ENCODE measurements at regions of chr4 and their contacts with region 1.

Region 1: DNA sequence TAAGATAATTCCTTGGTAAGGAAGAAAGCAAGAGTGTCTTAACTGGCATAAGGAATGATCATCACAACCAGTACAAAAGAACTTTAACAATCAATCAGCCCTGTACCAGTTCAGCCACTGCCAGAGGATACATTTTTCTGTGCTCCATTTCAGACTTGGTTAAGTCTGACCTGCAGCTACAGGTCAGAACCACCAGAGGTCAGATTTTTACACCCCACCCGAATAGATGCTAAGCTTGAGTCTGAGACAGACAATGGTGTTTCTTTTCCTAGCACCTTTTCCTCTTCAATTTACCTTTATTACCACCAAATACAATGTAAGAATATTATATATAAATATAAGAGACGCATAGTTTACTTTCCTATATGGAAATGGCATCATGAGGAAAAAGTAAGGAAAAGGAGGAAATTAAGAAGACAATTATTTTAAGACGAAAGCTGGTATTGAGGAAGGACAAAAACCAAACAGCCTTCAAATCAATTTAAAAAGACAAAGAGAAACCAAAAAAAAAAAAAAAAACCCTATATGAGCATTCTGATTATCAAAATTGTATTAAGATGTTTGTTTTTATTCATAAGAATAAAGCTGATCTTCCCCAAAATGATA is 215.3 kb upstream of the TTC29 start:
- DNase-seq: no peak
- ATAC-seq: peak; percentile 59

Region 2: GRCh38 chr4:147111033-147111367 is 50.0 kb before region 1 on chr4:
- intact Hi-C with region 1: loop called (anchors 5 kb)
- DNase-seq: no peak
- ATAC-seq: no peak

Region 3: DNA sequence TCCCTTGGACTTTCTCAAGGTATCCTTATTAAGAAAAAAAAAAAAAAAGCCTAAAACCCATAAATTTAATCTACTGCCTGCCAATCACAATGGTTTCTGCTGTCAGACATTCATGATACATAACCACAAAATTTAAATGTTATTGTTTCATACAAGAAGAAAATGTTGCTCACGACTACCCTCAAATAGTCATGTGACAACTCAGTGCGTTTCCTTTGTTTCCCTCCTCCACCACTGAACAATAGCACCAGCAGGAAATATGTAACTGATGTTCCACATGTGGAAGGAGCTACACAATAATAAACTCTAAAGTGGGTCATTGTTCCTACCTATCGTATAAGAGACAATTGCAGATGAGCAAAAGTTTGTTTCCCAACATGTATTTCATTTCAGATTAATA is 75.8 kb after region 1 on chr4:
- intact Hi-C with region 1: no loop called
- DNase-seq: no peak
- ATAC-seq: no peak

Region 4: GRCh38 chr4:147299205-147299604 is 138.2 kb after region 1 on chr4:
- intact Hi-C with region 1: no loop called
- DNase-seq: no peak
- ATAC-seq: no peak

Region 5: DNA sequence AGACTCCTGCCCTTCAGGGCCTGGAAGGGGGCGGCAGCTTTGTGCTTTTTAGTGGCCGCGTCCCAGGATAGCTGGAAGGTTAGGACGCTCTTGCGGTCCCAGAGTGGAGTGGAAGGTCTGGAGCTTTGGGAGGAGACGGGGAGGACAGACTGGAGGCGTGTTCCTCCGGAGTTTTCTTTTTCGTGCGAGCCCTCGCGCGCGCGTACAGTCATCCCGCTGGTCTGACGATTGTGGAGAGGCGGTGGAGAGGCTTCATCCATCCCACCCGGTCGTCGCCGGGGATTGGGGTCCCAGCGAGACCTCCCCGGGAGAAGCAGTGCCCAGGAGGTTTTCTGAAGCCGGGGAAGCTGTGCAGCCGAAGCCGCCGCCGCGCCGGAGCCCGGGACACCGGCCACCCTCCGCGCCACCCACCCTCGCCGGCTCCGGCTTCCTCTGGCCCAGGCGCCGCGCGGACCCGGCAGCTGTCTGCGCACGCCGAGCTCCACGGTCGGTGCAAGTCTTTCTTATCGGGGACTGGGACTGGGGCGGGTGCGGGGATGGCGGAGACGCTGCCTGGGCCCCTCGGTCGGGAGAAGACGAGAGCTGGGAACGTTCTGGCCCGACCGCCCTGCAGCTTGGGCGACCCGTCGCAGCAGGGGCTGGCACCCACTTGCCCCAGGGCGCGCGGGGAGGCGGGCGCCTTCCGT is 320.0 kb after region 1 on chr4 and contains the start of gene EDNRA:
- intact Hi-C with region 1: loop called (anchors 10 kb)
- DNase-seq: peak; percentile 61
- ATAC-seq: peak; percentile 57
- total RNA-seq, gene EDNRA: 4.9 TPM

Region 6: GRCh38 chr4:147590249-147590920 is 429.4 kb after region 1 on chr4:
- intact Hi-C with region 1: loop called (anchors 5 kb)
- DNase-seq: no peak
- ATAC-seq: no peak